Dendritic cell treated with granulocyte-macrophage colony-stimulating factor and Interleukin-4, amounts not matched to agents 40 ng/mL and 50 ng/mL, for 4 days (primary cell): ENCODE measurements at regions of chr5 and their contacts with region 1.

Region 1: GRCh38 chr5:1644810-1645571 is 121.2 kb upstream of the LPCAT1 start:
- H3K4me3 Mint-ChIP-seq: peak overlapping the region; percentile 20
- H3K27ac Mint-ChIP-seq: no peak overlapping the region
- H3K4me1 Mint-ChIP-seq: peaks cover 6% of the 10 kb centered on the region
- H3K27me3 Mint-ChIP-seq: peaks cover 61% of the 10 kb centered on the region

Region 2: DNA sequence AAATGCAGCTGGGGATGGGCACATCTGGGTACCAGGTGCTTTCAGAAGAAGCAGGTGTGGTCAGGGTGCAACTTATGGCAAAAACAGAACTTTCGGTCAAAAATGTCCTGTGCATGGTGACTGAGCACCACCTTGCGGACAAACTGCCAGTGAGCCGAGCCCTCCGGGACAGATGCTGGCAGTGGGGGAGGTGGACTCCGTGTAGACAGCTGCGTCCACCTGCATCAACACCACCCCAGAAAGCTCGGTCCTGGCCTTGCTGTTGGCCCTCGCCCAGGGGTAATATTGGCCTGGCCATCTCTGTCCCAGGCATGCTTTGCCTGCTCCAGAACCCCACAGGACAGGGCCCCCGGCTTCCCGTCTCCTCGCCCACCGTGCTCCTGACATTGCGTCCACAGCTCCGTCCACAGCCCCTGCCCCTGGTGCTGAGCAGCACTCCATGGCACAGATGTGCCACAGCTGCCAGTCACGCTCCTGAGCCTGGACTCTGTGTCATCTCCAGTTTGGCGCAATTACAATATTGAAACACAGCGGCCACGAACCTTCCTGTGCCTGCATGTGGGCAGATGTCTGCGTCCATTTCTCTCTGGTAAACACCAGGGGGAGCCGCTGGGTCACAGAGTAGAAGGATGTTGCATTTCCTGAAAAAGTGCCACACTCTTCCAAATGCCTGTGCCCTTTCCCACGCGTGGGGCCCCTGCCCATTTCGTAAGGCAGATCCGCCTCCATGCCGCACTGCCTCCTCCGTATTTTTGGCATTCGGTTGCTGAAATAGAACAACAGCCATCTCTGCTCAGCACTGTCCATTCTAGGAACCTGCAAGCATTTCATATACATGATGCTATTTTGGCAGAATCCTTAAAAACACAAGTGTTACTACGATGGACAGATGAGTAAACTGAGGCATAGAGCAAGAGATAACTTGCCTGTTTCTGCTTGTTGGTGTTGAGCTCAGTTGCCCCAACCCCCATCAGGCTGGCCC is 477.0 kb before region 1 on chr5:
- intact Hi-C with region 1: loop called (anchors 1 kb)
- H3K4me3 Mint-ChIP-seq: peak overlapping the region; percentile 4
- H3K27ac Mint-ChIP-seq: no peak overlapping the region
- H3K4me1 Mint-ChIP-seq: peaks cover 10% of the 10 kb centered on the region
- H3K27me3 Mint-ChIP-seq: peaks cover 37% of the 10 kb centered on the region

Region 3: DNA sequence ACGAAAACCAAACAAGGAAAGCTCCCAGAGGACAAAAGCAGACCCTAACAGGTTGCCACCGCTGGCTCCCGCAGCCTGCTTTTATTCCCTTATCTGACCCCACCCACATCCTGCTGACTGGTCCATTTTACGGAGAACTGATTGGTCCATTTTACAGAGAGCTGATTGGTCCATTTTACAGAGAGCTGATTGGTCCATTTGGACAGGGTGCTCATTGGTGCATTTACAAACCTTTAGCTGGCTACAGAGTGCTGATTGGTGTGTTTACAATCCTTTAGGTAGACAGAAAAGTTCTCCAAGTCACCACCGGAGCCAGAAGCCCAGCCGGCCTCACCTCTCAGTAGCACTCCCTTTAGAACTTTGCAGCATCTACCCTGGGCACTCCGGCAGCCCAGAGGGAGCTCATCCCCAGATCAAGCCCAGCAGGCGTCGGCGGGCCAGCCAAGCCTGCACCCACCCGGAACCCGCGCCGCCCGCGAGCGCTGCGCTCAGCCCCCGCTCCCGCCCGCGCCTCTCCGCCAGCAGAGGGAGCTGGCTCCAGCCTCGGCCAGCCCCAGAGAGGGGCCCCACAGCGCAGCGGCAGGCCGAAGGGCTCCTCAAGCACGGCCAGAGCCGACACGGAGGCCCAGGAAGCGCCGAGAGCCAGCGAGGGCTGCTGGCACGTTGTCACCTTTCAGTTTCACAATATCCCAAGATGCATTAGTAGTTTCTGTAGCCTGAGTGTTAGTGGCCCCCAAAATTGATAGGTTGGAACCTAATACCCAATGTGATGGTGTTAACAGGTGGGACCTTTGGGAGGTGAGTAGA is 264.8 kb before region 1 on chr5:
- intact Hi-C with region 1: loop called (anchors 2 kb)
- H3K4me3 Mint-ChIP-seq: no peak overlapping the region
- H3K27ac Mint-ChIP-seq: no peak overlapping the region
- H3K4me1 Mint-ChIP-seq: peaks cover under 1% of the 10 kb centered on the region
- H3K27me3 Mint-ChIP-seq: peaks cover 45% of the 10 kb centered on the region

Region 4: GRCh38 chr5:1709171-1709803 is 64.3 kb after region 1 on chr5:
- intact Hi-C with region 1: no loop called
- H3K4me3 Mint-ChIP-seq: no peak overlapping the region
- H3K27ac Mint-ChIP-seq: no peak overlapping the region
- H3K4me1 Mint-ChIP-seq: no peaks in the 10 kb centered on the region
- H3K27me3 Mint-ChIP-seq: peaks cover 23% of the 10 kb centered on the region

Region 5: GRCh38 chr5:2550509-2550908 is 905.5 kb after region 1 on chr5:
- intact Hi-C with region 1: no loop called
- H3K4me3 Mint-ChIP-seq: no peak overlapping the region
- H3K27ac Mint-ChIP-seq: no peak overlapping the region
- H3K4me1 Mint-ChIP-seq: no peaks in the 10 kb centered on the region
- H3K27me3 Mint-ChIP-seq: no peaks in the 10 kb centered on the region